ENCODE measurements at regions of chr1 and their contacts with region 1.

Region 1: DNA sequence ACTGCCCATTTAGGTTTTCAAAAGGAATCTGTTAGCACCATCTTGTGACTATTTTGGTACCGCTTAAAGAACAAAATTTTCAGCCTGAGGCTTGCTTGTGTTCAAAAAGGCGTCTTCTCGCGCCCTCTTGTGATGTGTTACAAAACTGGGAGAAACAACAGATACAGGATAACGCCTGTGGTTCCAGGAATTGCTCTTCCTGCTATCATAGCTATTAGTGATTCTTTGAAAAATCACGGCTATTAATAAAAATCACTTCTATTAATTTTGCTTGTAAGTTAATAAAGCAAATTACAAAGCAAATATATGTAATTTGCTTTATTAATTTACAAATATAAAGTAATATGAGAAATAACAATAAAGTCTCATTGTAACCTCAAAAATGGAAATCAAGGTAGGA is 82.2 kb upstream of the ABCD3 start:
- DNase-seq: peak in 9 of 10 donors; percentile 51 to 86 (median 60)
- H3K4me3 ChIP-seq: peak overlapping the region in 1 of 59 donors; percentile 11
- H3K27ac ChIP-seq: peak overlapping the region in 3 of 59 donors; percentile 17 to 44 (median 24)
- H3K27me3 ChIP-seq: peaks cover 0 to 8% (median 0%) of the 10 kb centered on the region in 45 donors
- CTCF ChIP-seq: peak in 55 of 56 donors; percentile 69 to 100 (median 98)

Region 2: GRCh38 chr1:94045465-94046056 is 290.4 kb before region 1 on chr1:
- intact Hi-C with region 1: loop called (anchors 5 kb)
- DNase-seq: peak; percentile 31 to 79 (median 58)
- H3K4me3 ChIP-seq: peak overlapping the region in 33 of 59 donors; percentile 6 to 54 (median 34)
- H3K27ac ChIP-seq: peak overlapping the region in 39 of 59 donors; percentile 13 to 87 (median 62)
- H3K27me3 ChIP-seq: no peaks in the 10 kb centered on the region
- CTCF ChIP-seq: peak; percentile 45 to 82 (median 71)

Region 3: DNA sequence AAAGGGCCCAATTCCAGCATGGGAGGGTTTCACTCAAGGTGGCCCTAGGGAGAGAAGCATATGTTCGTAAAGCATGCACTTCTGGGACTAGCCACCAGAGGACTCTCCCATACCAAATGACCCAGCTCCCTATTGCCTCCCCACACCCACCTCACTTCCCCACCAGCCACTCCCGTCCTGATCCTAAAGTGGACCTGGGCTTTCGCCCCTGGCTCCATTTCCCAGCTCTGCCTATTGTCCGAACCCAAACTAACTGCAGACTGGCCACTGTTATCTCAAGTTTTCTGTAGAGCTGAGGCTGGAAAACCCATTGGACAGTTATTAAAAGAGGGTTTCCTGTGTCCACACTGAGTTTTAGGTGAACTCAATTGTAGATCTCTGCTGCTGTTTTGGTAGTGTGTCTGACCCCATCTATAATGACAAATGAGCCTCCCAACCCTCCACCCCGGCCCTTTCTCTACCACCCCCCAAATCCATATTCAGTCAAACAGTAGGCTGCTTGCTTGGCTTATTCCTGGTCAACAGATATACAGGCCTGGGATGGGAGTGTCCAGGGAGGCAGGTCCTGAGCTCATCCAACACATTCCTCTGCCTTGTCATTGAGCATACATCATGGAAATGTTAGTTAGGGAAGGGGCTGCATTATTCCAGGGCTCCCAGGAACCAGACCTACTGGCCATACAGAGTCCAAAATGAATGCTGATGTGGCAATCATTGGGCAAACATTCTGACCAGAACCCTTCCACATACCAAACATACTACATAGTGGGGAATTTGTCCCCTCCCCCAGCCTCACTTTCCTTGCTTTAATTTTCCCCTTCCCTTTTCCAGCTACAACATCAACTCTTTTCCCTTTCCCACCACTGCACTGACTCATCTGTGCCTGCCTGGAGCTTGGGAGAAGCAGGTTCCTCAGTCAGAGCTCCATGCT is 274.2 kb before region 1 on chr1:
- intact Hi-C with region 1: loop called (anchors 2 to 5 kb)
- DNase-seq: peak in 7 of 10 donors; percentile 52 to 75 (median 59)
- H3K4me3 ChIP-seq: no peak overlapping the region
- H3K27ac ChIP-seq: peak overlapping the region in 9 of 59 donors; percentile 5 to 61 (median 23)
- H3K27me3 ChIP-seq: no peaks in the 10 kb centered on the region
- CTCF ChIP-seq: peak; percentile 77 to 95 (median 88)

Measured in dorsolateral prefrontal cortex (tissue), 120 donors.